Left ventricle myocardium inferior (tissue), 1 donor: ENCODE measurements at regions of chr5 and their contacts with region 1.

Region 1: DNA sequence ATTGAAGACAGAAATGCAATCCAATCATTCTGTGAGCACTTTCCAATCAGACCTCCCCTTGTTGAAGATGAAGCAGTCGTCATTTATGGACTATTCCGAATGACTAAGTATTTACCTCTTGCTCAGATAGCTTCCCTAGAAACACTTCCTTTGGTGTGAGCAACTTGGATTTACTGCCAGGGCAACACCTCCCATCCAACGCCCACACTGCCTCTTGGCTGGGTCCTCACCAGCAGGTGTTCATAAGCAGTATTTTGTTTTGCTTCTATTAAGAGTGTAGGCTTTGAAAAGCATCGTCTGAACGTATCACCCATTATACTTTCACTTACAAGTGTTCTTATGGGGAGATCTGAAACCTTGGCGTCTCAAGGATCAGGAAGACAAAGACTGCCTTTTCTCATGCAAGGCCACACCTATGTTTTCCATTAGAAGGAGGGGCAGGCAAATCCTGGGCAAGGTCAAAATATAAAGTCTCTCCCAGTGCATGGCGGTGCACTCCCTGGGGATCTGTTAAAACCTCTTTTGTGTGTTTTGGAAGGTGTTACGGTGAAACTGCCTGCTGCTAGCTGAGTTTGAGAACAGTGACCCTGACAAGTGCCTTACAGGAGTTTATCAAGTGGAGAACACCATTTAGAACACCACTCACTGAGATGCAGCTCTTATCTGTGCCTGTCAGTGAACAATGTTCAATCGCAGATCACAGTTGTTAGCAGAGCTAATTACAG is 10.6 kb upstream of the MARCHF3 start:
- DNase-seq: no peak
- H3K4me3 ChIP-seq: peak overlapping the region; percentile 25
- H3K27ac ChIP-seq: peak overlapping the region; percentile 75
- H3K4me1 ChIP-seq: peaks cover 43% of the 10 kb centered on the region
- H3K27me3 ChIP-seq: no peaks in the 10 kb centered on the region
- CTCF ChIP-seq: no peak

Region 2: DNA sequence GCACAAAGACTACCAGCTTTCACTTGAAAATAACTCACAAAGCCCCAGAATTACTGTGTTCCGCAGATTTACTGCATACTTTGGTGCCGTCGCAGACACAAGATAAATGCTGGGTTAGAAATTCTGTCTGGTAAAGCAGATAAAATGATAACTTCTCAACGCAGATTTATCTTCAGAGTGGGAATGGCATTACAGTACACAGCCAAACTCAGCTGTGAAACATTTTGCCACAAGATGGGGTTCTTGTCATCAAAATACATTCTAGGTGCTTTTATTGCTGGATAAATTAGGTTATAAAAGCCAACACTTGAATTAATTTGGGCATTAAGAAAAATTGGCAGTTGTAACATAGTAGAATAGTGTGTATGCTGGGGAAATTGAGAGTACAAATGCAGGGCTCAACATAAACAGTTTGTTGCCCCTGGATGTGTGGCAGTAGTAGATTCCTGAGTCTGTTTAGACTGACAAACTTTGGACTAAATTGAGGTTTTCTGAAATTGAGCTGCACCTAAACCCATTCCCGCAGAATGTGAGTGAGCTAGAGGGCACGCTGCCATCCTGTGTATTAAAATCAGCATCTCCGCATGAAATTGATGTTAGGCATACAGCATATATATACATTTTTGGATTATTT is 202.9 kb before region 1 on chr5:
- intact Hi-C with region 1: loop called (anchors 10 kb)
- DNase-seq: no peak
- H3K4me3 ChIP-seq: no peak overlapping the region
- H3K27ac ChIP-seq: no peak overlapping the region
- H3K4me1 ChIP-seq: no peaks in the 10 kb centered on the region
- H3K27me3 ChIP-seq: no peaks in the 10 kb centered on the region
- CTCF ChIP-seq: peak; percentile 72

Region 3: DNA sequence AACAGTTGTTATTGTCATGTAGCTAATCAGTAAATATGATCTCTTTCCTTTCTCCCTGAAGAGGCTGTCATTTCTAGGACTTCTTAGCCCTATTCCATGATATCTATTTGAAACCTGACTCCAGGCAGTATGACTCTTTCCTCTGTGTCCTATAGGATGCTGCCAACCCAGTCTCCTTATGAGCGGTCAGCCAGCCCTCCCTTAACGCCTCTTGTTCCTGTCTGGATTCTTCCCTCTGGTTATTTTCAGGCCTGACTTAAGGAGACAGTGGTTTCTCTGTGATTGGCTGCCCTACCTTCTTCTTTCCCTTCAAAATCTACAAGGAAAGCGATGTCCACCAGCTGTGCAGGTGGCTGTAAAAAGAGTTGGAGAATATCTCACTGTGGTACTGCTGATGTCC is 51.7 kb after region 1 on chr5:
- intact Hi-C with region 1: no loop called
- DNase-seq: no peak
- H3K4me3 ChIP-seq: no peak overlapping the region
- H3K27ac ChIP-seq: no peak overlapping the region
- H3K4me1 ChIP-seq: no peaks in the 10 kb centered on the region
- H3K27me3 ChIP-seq: no peaks in the 10 kb centered on the region
- CTCF ChIP-seq: no peak